OCI-LY7 (cell line): ENCODE measurements at regions of chr2 and their contacts with region 1.

Region 1: DNA sequence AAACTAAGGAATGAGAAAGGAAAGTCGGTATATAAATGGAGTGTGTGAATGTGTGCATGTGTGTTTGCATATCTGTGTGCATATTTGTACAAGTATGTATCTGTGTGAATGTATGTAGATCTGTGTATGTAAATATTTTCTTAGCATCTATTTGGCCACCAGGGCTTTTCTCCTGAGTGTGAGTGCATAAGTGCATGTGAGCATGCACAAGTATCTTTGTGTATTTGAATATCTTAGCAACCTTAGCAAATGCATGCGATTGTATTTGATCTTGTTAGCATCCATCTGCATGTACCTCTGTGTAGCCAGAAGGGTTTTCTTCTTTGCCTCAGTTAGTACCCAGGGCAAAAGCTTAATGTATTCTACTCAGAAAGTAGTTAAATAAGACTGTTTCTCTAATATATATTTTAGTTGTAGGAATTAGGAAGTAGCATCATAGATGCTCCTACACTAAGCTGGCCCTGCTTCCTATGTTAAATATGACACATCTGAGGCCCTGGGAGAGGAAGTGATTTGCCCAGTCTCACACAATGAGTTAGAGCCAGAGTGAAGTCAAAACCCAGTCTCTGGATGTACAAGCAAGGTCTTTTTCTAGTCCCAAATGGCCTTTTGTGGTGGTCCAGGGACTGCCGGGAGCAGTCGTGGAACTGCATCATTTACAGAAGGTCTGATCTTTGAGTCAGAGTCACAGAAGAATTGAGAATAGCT is 9.2 kb downstream of the FKBP1B start:
- DNase-seq: no peak
- H3K4me3 ChIP-seq: no peak overlapping the region
- H3K27ac ChIP-seq: no peak overlapping the region
- H3K4me1 ChIP-seq: no peaks in the 10 kb centered on the region
- CTCF ChIP-seq: no peak

Region 2: DNA sequence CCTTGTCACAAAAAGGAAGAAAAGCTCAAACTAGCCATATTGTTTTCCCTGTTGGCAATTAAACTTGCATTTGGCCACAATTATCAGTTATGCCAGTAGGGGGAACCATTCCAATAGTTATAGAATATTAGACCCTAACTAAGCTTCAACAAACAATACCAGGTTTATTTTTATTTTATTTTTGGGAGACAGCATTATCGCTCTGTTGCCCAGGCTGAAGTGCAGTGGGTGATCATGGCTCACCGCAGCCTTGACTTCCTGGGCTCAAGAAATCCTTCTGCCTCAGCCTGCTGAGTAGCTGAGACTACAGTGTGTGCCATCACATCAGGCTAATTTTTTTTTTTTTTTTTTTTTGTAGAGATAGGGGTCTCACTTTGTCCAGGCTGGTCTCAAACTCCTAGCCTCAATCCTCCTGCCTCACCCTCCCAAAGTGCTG is 233.9 kb before region 1 on chr2:
- CTCF ChIA-PET with region 1: no interaction called
- POLR2A ChIA-PET with region 1: interaction called, 5 read pairs
- intact Hi-C with region 1: loop called (anchors 1 kb)
- DNase-seq: peak; percentile 73
- H3K4me3 ChIP-seq: no peak overlapping the region
- H3K27ac ChIP-seq: no peak overlapping the region
- H3K4me1 ChIP-seq: peaks cover 7% of the 10 kb centered on the region
- CTCF ChIP-seq: peak; percentile 93

Region 3: DNA sequence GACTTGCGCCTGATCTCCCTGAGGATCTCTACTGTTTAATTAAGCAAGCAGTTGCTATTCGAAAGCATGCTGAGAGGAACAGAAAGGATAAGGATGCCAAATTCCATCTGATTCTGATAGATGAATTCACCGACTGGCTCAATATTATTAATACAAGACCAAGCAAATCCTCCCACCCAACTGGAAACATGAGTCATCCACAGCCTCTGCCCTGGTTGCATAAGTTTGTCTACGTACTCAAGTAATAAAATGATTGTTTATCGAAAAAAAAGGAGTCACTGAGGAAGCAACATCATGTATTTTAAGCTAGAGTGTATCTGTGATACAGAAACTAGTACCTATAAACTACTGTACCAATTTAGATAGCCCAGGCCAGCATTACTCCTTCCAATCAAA is 157.8 kb before region 1 on chr2:
- CTCF ChIA-PET with region 1: no interaction called
- POLR2A ChIA-PET with region 1: no interaction called
- intact Hi-C with region 1: no loop called
- DNase-seq: no peak
- H3K4me3 ChIP-seq: no peak overlapping the region
- H3K27ac ChIP-seq: no peak overlapping the region
- H3K4me1 ChIP-seq: no peaks in the 10 kb centered on the region
- CTCF ChIP-seq: no peak

Region 4: GRCh38 chr2:24228470-24228869 is 169.8 kb after region 1 on chr2:
- CTCF ChIA-PET with region 1: no interaction called
- POLR2A ChIA-PET with region 1: no interaction called
- intact Hi-C with region 1: no loop called
- DNase-seq: peak; percentile 27
- H3K4me3 ChIP-seq: no peak overlapping the region
- H3K27ac ChIP-seq: no peak overlapping the region
- H3K4me1 ChIP-seq: no peaks in the 10 kb centered on the region
- CTCF ChIP-seq: peak; percentile 78